CD4-positive, alpha-beta T cell (primary cell): ENCODE measurements at regions of chr1 and their contacts with region 1.

Region 1: GRCh38 chr1:11099310-11100149 is at the start of gene EXOSC10:
- DNase-seq: peak; percentile 90 to 97 (median 94)
- ATAC-seq: peak; percentile 98
- H3K4me3 ChIP-seq: peak within 1 kb of the TSS; percentile 92
- H3K4me3 Mint-ChIP-seq: peak within 1 kb of the TSS; percentile 99
- H3K27ac ChIP-seq: peak within 1 kb of the TSS; percentile 50 to 66
- H3K27ac Mint-ChIP-seq: peak within 1 kb of the TSS; percentile 93
- H3K4me1 ChIP-seq: peaks cover 12% of the 10 kb centered on the region
- H3K4me1 Mint-ChIP-seq: peaks cover 21% of the 10 kb centered on the region
- H3K27me3 ChIP-seq: no peaks in the 10 kb centered on the region
- H3K27me3 Mint-ChIP-seq: no peaks in the 10 kb centered on the region
- CTCF ChIP-seq: no peak
- total RNA-seq, gene EXOSC10: 81.6 to 89.0 TPM

Region 2: GRCh38 chr1:10082785-10083479 is 1016.6 kb before region 1 on chr1:
- CTCF ChIA-PET with region 1: no interaction called
- POLR2A ChIA-PET with region 1: no interaction called
- intact Hi-C with region 1: no loop called
- DNase-seq: no peak
- ATAC-seq: no peak
- H3K4me3 ChIP-seq: no peak overlapping the region
- H3K4me3 Mint-ChIP-seq: no peak overlapping the region
- H3K27ac ChIP-seq: no peak overlapping the region
- H3K27ac Mint-ChIP-seq: no peak overlapping the region
- H3K4me1 ChIP-seq: no peaks in the 10 kb centered on the region
- H3K4me1 Mint-ChIP-seq: peaks cover 23% of the 10 kb centered on the region
- H3K27me3 ChIP-seq: no peaks in the 10 kb centered on the region
- H3K27me3 Mint-ChIP-seq: no peaks in the 10 kb centered on the region
- CTCF ChIP-seq: no peak

Region 3: DNA sequence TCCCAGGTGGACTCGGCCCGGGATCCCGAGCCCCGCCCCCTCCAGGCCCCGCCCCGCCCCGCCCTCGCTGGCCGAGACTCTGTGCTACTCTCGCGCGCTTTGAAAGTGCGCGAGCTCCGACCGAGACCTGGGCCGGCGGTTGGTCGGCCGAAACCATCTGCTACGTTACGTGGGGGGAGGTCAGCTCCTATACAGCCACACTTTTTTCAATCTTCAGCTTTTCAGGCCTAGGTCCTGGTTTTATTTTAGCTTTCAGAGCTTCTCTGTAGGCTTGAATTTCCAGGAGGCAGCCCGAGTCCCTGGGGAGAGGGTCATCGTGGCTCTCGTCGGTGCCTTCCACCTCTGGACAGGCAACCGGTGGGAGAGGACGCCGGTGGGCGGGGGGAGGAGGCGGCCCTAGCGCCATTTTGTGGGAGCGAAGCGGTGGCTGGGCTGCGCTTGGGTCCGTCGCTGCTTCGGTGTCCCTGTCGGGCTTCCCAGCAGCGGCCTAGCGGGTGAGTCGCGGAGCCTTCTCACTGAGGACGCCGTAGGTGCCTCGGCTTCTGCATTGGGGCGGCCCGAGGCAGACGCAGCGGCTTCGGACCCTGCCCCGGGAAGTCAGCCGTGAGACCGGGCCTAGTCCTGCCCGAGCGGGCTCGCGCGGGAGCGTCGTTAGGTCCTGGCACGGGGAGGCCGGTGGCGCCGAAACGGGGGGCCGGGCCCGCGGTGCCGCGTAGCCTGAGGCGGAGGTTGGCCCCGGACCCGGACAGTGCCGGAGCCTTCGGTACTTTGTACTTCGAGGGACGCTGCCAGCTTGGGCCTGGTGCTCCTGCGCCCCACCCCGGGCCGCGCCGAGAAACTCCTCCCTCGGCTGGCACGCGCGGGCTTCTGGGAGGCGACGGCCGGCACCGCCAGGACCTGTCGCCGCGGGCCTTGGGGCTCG is 87.0 kb before region 1 on chr1 and contains the start of gene TARDBP:
- CTCF ChIA-PET with region 1: interaction called, 3 read pairs
- POLR2A ChIA-PET with region 1: interaction called, 10 read pairs
- intact Hi-C with region 1: loop called in 1 of 2 experiments (anchors 5 kb)
- DNase-seq: peak; percentile 80 to 95 (median 88)
- ATAC-seq: peak; percentile 85
- H3K4me3 ChIP-seq: peak within 1 kb of the TSS; percentile 85
- H3K4me3 Mint-ChIP-seq: peak within 1 kb of the TSS; percentile 94
- H3K27ac ChIP-seq: peak within 1 kb of the TSS; percentile 91 to 99
- H3K27ac Mint-ChIP-seq: peak within 1 kb of the TSS; percentile 98
- H3K4me1 ChIP-seq: peaks cover 44% of the 10 kb centered on the region
- H3K4me1 Mint-ChIP-seq: peaks cover 34% of the 10 kb centered on the region
- H3K27me3 ChIP-seq: no peaks in the 10 kb centered on the region
- H3K27me3 Mint-ChIP-seq: no peaks in the 10 kb centered on the region
- CTCF ChIP-seq: no peak
- total RNA-seq, gene TARDBP: 141 to 149 TPM

Region 4: DNA sequence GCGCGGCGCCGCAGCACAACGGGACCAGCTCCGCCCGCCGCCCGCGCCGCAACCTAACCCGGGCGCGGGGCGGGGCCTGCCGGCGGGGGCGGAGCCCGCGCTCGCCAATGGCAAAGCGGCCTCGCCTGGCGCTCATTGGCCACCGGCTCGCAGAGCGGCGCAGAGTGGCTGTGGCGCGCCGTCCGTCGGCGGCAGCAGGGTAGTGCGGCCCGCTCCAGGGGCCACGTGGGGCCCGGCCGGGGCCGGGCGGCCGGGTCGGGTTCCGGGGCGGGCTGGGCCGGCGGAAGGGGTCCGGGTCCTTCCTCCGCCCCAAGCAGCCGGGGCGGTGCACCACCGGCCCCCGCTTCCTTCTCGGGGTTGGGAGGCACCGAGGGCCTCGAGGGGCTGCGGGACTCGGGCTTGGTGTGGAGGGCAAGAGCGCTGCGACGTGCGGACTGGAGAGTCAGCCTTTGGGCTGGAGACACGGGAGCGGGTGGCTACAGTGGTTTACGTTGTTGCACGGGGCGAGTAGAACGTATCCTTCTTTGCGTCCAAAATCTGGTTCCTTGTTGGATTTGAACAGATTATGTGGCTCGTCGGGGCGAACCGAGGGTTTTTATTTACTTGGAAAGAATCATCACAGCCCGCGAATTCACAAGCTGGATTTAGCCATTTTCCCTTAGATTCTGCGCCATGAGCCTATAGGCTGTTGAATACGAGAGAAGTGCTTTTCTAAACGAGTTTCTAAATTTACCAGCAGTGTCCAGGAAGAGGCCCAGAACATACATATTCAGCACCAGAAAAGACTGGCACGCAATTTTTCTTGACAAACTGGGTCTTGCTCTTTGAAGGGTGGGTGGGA is 39.3 kb before region 1 on chr1 and contains the start of gene SRM:
- CTCF ChIA-PET with region 1: interaction called, 5 read pairs
- POLR2A ChIA-PET with region 1: interaction called, 31 read pairs
- intact Hi-C with region 1: loop called in 1 of 2 experiments (anchors 1 kb)
- DNase-seq: peak; percentile 76 to 96 (median 89)
- ATAC-seq: peak; percentile 96
- H3K4me3 ChIP-seq: peak within 1 kb of the TSS; percentile 76
- H3K4me3 Mint-ChIP-seq: peak within 1 kb of the TSS; percentile 96
- H3K27ac ChIP-seq: peak within 1 kb of the TSS; percentile 25 to 57
- H3K27ac Mint-ChIP-seq: peak within 1 kb of the TSS; percentile 77
- H3K4me1 ChIP-seq: peaks cover 32% of the 10 kb centered on the region
- H3K4me1 Mint-ChIP-seq: peaks cover 39% of the 10 kb centered on the region
- H3K27me3 ChIP-seq: no peaks in the 10 kb centered on the region
- H3K27me3 Mint-ChIP-seq: no peaks in the 10 kb centered on the region
- CTCF ChIP-seq: no peak
- total RNA-seq, gene SRM: 21.2 to 24.8 TPM

Region 5: GRCh38 chr1:11248155-11248554 is 148.6 kb after region 1 on chr1:
- CTCF ChIA-PET with region 1: no interaction called
- POLR2A ChIA-PET with region 1: no interaction called
- intact Hi-C with region 1: no loop called
- DNase-seq: no peak
- ATAC-seq: no peak
- H3K4me3 ChIP-seq: no peak overlapping the region
- H3K4me3 Mint-ChIP-seq: no peak overlapping the region
- H3K27ac ChIP-seq: no peak overlapping the region
- H3K27ac Mint-ChIP-seq: no peak overlapping the region
- H3K4me1 ChIP-seq: peaks cover 21% of the 10 kb centered on the region
- H3K4me1 Mint-ChIP-seq: peaks cover 25% of the 10 kb centered on the region
- H3K27me3 ChIP-seq: no peaks in the 10 kb centered on the region
- H3K27me3 Mint-ChIP-seq: no peaks in the 10 kb centered on the region
- CTCF ChIP-seq: no peak

Region 6: GRCh38 chr1:11735854-11736745 is 636.6 kb after region 1 on chr1 and contains the start of gene AGTRAP:
- CTCF ChIA-PET with region 1: no interaction called
- POLR2A ChIA-PET with region 1: no interaction called
- intact Hi-C with region 1: loop called in 1 of 2 experiments (anchors 5 kb)
- DNase-seq: peak; percentile 72 to 95 (median 81)
- ATAC-seq: peak; percentile 65
- H3K4me3 ChIP-seq: peak within 1 kb of the TSS; percentile 99
- H3K4me3 Mint-ChIP-seq: peak within 1 kb of the TSS; percentile 96
- H3K27ac ChIP-seq: peak within 1 kb of the TSS; percentile 75
- H3K27ac Mint-ChIP-seq: peak within 1 kb of the TSS; percentile 43
- H3K4me1 ChIP-seq: peaks cover 74% of the 10 kb centered on the region
- H3K4me1 Mint-ChIP-seq: peaks cover 73% of the 10 kb centered on the region
- H3K27me3 ChIP-seq: no peaks in the 10 kb centered on the region
- H3K27me3 Mint-ChIP-seq: no peaks in the 10 kb centered on the region
- CTCF ChIP-seq: no peak
- total RNA-seq, gene AGTRAP: 21.3 to 21.8 TPM

Region 7: DNA sequence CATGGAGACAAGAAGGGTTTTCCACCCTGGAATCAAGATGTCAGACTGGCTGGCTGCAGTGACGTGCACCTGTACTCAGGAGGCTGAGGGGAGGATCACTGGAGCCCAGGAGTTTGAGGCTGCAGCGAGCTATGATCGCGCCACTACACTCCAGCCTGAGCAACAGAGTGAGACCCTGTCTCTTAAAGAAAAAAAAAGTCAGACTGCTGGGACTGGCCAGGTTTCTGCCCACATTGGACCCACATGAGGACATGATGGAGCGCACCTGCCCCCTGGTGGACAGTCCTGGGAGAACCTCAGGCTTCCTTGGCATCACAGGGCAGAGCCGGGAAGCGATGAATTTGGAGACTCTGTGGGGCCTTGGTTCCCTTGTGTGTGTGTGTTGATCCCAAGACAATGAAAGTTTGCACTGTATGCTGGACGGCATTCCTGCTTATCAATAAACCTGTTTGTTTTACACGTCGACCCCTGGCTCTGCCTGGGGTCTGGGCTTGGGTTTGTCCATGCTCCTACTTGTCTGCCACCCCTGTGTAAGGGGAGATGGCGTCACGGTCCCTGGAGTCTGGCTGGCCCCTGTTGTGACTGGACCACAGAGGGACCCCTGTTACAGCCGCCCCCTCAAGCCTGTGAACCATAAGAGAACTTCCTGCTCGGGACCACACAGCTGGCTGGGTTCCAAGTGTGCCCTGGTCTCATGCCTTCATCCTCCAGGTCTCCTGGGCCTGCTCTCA is 1109.4 kb after region 1 on chr1:
- CTCF ChIA-PET with region 1: no interaction called
- POLR2A ChIA-PET with region 1: no interaction called
- intact Hi-C with region 1: no loop called
- DNase-seq: peak; percentile 75 to 93 (median 85)
- ATAC-seq: peak; percentile 73
- H3K4me3 ChIP-seq: no peak overlapping the region
- H3K4me3 Mint-ChIP-seq: peak overlapping the region; percentile 21
- H3K27ac ChIP-seq: peak overlapping the region; percentile 29 to 49
- H3K27ac Mint-ChIP-seq: peak overlapping the region; percentile 83
- H3K4me1 ChIP-seq: peaks cover 55% of the 10 kb centered on the region
- H3K4me1 Mint-ChIP-seq: peaks cover 56% of the 10 kb centered on the region
- H3K27me3 ChIP-seq: no peaks in the 10 kb centered on the region
- H3K27me3 Mint-ChIP-seq: no peaks in the 10 kb centered on the region
- CTCF ChIP-seq: peak; percentile 96